Colonic mucosa (tissue), 4 donors: ENCODE measurements at regions of chr12 and their contacts with region 1.

Region 1: GRCh38 chr12:15789220-15790171 is at the start of gene EPS8:
- DNase-seq: peak; percentile 93
- H3K4me3 ChIP-seq: peak within 1 kb of the TSS; percentile 60
- H3K27ac ChIP-seq: peak within 1 kb of the TSS; percentile 88
- H3K4me1 ChIP-seq: no peaks in the 10 kb centered on the region
- H3K27me3 ChIP-seq: no peaks in the 10 kb centered on the region
- CTCF ChIP-seq: no peak
- total RNA-seq, gene EPS8: 93.7 to 161 TPM

Region 2: GRCh38 chr12:15563663-15564062 is 225.8 kb before region 1 on chr12:
- intact Hi-C with region 1: no loop called
- DNase-seq: peak; percentile 46
- H3K4me3 ChIP-seq: no peak overlapping the region
- H3K27ac ChIP-seq: peak overlapping the region; percentile 24
- H3K4me1 ChIP-seq: no peaks in the 10 kb centered on the region
- H3K27me3 ChIP-seq: no peaks in the 10 kb centered on the region
- CTCF ChIP-seq: no peak

Region 3: GRCh38 chr12:15599266-15600037 is 190.0 kb before region 1 on chr12:
- intact Hi-C with region 1: loop called (anchors 5 kb)
- DNase-seq: no peak
- H3K4me3 ChIP-seq: no peak overlapping the region
- H3K27ac ChIP-seq: no peak overlapping the region
- H3K4me1 ChIP-seq: peaks cover 5% of the 10 kb centered on the region
- H3K27me3 ChIP-seq: no peaks in the 10 kb centered on the region
- CTCF ChIP-seq: no peak

Region 4: DNA sequence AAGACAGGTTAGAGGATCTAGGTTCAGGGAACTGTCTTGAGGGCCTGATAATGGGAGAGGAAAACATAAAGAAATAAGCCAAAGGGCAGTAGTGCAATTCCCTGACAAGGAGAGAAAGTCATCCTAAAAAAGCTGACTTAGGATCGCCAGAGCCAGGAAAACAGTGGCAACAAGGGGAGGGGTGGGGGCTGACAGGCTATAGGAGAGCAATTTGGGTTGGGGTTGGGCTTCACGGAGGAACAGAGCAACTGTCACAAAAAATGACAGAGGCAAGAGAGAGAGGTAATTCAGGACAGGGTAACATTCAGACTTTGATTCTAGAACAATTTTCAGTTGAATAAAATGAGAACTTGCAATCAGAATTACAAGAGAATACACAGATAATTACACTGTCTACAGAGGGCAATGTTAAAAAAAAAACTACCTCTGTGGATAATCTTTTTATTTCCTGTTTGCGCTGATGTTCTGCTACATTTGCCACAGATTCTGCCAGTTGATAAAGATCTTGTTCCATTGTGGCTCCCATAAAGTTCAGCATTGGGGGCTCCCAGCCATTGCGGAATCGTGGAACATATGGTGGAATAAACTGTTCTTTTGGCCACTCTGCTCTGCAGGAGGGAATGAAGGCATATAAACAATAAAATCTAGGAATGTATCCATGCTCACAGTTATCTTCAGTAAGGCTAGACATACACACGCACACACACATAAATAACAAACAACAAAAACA is 138.9 kb before region 1 on chr12:
- intact Hi-C with region 1: no loop called
- DNase-seq: no peak
- H3K4me3 ChIP-seq: no peak overlapping the region
- H3K27ac ChIP-seq: no peak overlapping the region
- H3K4me1 ChIP-seq: no peaks in the 10 kb centered on the region
- H3K27me3 ChIP-seq: no peaks in the 10 kb centered on the region
- CTCF ChIP-seq: no peak

Region 5: DNA sequence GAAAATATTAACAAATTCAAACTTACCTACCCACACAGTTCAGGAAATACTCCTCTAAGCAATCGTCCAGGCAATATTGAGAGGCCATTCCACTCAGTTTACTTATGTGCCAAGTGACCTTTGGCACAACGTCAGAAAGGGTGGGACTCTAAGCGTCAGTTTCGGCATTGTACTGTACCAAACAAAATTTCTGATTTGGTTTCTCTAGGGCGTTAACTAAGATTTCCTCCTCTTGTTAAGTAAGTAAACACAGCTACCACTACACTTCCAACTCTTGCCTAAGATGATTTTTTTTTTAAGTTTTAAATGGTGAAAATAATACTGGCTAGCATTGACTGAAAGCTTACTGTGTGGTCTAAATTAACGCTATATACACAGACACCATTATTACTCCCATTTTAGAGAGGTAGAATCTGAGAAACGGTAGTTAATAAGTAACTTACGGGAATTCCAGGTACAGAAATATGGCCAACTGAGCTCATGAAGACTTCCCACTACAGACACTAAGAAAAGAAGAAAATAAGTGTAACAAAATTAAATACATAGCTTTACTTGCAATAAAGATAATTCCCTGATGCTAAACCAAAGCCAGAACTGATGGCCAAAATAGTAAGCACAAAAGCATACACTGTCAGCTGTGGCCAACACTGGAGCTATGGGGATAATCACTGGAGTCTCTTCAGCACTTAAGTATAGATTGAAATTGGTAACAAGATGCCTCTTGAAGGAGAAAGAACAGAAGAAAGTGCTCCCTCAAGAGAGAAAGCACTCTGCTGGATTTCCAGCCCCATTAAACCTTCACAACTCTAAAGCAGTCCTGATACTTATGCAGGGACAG is 76.5 kb before region 1 on chr12:
- intact Hi-C with region 1: loop called (anchors 10 kb)
- DNase-seq: peak; percentile 90
- H3K4me3 ChIP-seq: no peak overlapping the region
- H3K27ac ChIP-seq: peak overlapping the region; percentile 88
- H3K4me1 ChIP-seq: no peaks in the 10 kb centered on the region
- H3K27me3 ChIP-seq: no peaks in the 10 kb centered on the region
- CTCF ChIP-seq: no peak

Region 6: DNA sequence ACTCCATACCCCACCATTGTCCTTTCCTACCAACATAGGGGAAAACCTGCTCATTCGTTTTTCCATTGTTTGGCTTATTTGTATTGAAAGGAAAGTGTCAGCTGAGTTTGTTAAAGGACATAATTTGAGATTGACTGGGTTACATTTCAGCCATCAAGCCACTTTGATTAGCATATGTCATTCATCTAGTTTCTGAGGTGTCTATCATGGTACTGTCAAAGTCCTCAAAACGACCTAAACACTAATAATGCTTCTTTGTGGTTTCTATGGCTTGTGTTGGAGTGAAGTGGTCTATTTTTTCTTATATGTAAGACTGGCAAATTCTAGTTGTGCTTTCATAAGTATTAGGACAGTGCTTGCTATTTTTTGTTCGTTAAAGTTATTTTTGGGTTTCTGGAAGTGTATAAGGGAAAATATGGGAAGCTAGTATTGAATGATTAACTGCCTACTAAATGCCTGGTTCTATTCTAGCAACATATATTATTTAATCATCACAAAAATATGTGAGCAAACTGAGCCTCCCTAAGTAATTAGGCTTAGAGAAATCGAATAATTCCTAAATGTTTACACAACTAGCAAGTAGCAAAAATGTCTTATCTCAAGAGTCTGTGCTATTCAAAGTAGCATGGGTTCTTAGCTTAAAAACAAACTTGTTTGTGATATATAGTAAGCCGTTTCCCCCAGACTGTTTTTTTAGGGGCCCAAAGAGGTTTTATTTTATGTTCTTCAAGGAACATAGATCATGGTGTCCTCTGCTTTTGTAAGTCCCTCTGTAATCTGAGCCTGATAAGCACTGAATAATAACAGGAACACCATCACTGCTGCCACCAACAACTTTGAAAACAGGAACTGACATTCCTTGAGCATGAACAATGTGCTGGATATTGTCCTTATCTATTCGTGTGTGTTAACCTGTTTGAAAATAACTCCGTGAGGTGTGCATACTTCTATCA is 188.8 kb after region 1 on chr12:
- intact Hi-C with region 1: no loop called
- DNase-seq: no peak
- H3K4me3 ChIP-seq: no peak overlapping the region
- H3K27ac ChIP-seq: peak overlapping the region; percentile 42
- H3K4me1 ChIP-seq: no peaks in the 10 kb centered on the region
- H3K27me3 ChIP-seq: no peaks in the 10 kb centered on the region
- CTCF ChIP-seq: no peak